Posterior cingulate gyrus (tissue), 11 donors: ENCODE measurements at regions of chr6 and their contacts with region 1.

Region 1: GRCh38 chr6:97059473-97059872 is 134.9 kb downstream of the KLHL32 start:
- DNase-seq: no peak

Region 2: GRCh38 chr6:96246563-96246962 is 812.9 kb before region 1 on chr6:
- intact Hi-C with region 1: no loop called
- DNase-seq: no peak

Region 3: DNA sequence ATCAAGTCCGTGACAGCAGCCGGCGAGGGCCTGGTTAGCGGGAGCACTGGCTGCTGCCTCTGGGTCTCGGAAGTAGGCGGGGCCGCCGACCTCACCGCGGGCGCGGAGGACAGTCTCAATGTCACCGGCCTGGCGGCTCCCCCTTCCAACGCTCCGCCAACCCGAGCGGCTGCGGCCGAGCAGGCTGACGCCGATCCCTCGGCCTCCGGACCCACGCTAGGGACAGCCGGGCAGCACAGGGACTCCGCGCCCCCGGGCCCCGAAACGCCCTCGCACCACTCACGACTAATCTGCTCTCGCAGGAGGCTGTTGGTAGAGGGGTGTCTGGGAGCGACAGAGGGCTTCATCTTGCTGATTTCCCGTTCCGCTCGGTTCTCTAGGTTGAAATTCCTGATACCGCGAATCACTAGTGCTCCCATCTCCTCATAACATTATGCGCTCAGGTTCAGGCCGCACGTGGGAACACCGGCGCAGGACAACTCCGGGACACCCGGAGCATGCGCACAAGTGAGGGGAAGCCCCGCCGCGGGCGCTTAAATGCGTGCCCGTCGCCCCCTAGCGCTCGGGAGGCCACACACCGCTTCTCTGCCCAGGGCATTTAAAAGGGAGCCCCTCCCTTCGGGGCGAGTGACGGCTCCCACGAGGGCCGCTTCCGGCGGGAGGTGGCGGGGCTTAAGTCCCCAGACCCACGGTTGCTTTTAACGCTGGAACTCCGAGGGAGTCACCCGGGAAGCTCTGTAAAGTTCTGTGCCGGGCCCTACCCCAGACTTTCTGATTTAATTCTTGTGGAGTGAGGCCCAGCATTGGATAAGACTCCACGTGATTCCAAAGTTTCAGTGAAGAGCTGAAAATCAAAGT is 161.9 kb before region 1 on chr6 and contains the start of gene NDUFAF4:
- intact Hi-C with region 1: loop called (anchors 2 kb)
- DNase-seq: peak; percentile 88 to 99 (median 94)

Region 4: GRCh38 chr6:97021194-97021593 is 38.3 kb before region 1 on chr6:
- intact Hi-C with region 1: no loop called
- DNase-seq: no peak

Region 5: DNA sequence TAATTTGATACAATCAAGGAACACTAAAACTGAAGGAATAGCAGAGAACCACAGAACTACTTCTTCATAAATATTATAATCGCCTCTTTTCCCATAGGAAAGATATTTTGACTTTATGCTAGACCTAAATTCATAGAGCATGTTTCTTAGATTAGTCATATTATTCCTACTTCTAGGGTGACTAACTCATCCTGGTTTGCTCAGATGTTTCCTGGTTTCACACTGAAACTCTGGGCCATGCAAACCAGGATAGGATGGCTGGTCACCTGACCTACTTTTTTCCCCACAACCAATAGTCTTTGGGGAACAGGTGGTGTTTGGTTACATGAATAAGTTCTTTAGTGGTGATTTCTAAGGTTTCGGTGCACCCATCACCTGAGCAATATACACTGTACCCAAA is 180.7 kb after region 1 on chr6:
- intact Hi-C with region 1: no loop called
- DNase-seq: no peak